Ascending aorta (tissue), 2 donors: ENCODE measurements at regions of chr13 and their contacts with region 1.

Region 1: DNA sequence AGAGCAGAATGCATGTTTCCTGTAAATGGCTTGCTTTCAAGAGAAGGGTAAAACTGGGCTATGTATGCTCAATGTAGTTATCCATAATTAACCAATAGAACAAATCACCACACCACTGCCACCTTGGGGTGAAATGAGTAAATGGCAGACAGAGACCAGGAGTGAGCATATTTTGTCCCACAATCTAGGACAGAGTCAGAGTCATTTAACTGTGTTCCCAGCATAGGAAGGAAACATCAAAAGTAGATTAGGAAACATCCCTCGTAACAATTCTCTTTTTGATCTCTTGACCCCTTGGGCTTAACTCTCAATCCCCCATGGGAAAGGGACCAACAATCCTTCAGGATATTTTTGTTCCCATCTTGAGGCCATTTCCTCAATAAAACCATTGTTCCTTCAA is 224.8 kb downstream of the NHLRC3 start:
- DNase-seq: peak in 1 of 2 donors; percentile 67
- H3K4me3 ChIP-seq: no peak overlapping the region
- H3K27ac ChIP-seq: no peak overlapping the region
- H3K4me1 ChIP-seq: no peaks in the 10 kb centered on the region
- H3K27me3 ChIP-seq: no peaks in the 10 kb centered on the region
- CTCF ChIP-seq: peak; percentile 27 to 62 (median 53)

Region 2: GRCh38 chr13:39144941-39145533 is 118.0 kb before region 1 on chr13:
- intact Hi-C with region 1: loop called (anchors 2 kb)
- DNase-seq: peak in 1 of 2 donors; percentile 77
- H3K4me3 ChIP-seq: peak overlapping the region; percentile 2 to 57
- H3K27ac ChIP-seq: no peak overlapping the region
- H3K4me1 ChIP-seq: peaks cover 0 to 3% of the 10 kb centered on the region in 2 donors
- H3K27me3 ChIP-seq: no peaks in the 10 kb centered on the region
- CTCF ChIP-seq: peak; percentile 45 to 84 (median 79)